ENCODE measurements at regions of chr9 and their contacts with region 1.

Region 1: GRCh38 chr9:33415501-33416038 is 13.2 kb upstream of the AQP7 start:
- DNase-seq: no peak
- H3K4me3 ChIP-seq: no peak overlapping the region
- H3K27me3 ChIP-seq: peaks cover 5% of the 10 kb centered on the region
- CTCF ChIP-seq: peak; percentile 82

Region 2: DNA sequence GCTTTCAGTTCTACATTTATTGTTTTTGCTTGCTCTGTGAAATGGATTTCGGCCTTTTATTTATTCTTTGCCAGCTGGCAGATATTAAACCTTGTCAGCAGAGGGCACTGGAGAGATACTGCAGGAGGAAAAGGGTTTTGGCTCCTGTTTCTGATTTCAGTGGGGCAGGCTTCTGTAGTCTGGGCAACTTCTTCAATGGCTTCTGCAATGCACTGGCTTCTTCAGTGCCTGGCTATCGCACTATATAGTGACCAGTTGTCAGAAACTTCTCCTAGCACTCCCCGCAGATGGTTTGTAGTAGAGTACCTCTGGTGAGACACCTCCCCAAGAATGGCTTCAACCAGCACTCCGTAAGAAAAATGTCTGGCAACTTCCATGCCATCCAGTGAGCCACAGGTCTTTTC is 128.5 kb before region 1 on chr9:
- CTCF ChIA-PET with region 1: interaction called, 25 read pairs
- POLR2A ChIA-PET with region 1: no interaction called
- DNase-seq: peak; percentile 15
- H3K4me3 ChIP-seq: no peak overlapping the region
- H3K27me3 ChIP-seq: no peaks in the 10 kb centered on the region
- CTCF ChIP-seq: peak; percentile 85

Region 3: GRCh38 chr9:33404788-33405362 is 10.7 kb before region 1 on chr9:
- CTCF ChIA-PET with region 1: interaction called, 42 read pairs
- POLR2A ChIA-PET with region 1: no interaction called
- DNase-seq: no peak
- H3K4me3 ChIP-seq: no peak overlapping the region
- H3K27me3 ChIP-seq: peaks cover 4% of the 10 kb centered on the region; the same call in 1 of the 2 replicates
- CTCF ChIP-seq: no peak

Region 4: DNA sequence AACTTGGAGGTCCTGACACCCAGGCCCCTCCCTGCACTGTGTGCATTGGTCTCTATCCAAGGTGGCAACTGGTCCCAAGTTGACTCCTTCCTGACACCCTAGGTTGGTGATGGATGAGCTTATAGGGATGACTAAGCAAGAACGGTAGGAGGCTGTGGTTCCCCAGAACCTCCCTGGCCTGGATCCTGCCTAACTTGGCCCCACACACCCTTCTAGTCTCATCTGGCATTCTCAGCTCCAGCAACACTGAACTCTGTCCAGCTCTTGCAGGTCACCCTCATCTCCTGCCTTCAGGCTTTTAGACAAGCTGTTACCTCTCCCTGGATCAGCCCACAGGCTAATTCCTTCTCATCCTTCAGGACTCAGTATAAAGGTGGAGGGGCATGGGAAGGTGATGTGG is 15.4 kb after region 1 on chr9:
- CTCF ChIA-PET with region 1: interaction called, 22 read pairs
- POLR2A ChIA-PET with region 1: no interaction called
- DNase-seq: no peak
- H3K4me3 ChIP-seq: no peak overlapping the region
- H3K27me3 ChIP-seq: peaks cover 3% of the 10 kb centered on the region
- CTCF ChIP-seq: no peak

Region 5: DNA sequence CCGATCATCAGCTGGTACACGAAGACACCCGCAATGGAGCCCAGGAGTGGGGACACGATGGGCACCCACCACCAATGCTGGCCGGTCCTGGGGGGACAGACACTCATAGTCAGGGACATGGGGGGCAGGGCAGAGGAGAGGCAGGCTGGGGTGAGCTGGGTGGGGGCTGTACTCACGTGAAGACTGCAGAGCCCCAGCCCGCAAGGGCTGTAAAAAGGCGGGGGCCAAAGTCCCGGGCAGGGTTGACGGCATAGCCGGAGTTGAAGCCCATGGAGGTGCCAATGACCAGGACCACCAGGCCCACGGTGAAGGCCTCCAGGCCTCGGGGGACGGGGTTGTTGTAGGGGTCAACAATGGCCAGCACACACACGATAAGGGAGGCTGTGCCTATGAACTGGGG is 26.6 kb after region 1 on chr9:
- CTCF ChIA-PET with region 1: interaction called, 16 read pairs
- POLR2A ChIA-PET with region 1: no interaction called
- DNase-seq: no peak
- H3K4me3 ChIP-seq: no peak overlapping the region
- H3K27me3 ChIP-seq: peaks cover 11% of the 10 kb centered on the region; the same call in 1 of the 2 replicates
- CTCF ChIP-seq: no peak

Region 6: DNA sequence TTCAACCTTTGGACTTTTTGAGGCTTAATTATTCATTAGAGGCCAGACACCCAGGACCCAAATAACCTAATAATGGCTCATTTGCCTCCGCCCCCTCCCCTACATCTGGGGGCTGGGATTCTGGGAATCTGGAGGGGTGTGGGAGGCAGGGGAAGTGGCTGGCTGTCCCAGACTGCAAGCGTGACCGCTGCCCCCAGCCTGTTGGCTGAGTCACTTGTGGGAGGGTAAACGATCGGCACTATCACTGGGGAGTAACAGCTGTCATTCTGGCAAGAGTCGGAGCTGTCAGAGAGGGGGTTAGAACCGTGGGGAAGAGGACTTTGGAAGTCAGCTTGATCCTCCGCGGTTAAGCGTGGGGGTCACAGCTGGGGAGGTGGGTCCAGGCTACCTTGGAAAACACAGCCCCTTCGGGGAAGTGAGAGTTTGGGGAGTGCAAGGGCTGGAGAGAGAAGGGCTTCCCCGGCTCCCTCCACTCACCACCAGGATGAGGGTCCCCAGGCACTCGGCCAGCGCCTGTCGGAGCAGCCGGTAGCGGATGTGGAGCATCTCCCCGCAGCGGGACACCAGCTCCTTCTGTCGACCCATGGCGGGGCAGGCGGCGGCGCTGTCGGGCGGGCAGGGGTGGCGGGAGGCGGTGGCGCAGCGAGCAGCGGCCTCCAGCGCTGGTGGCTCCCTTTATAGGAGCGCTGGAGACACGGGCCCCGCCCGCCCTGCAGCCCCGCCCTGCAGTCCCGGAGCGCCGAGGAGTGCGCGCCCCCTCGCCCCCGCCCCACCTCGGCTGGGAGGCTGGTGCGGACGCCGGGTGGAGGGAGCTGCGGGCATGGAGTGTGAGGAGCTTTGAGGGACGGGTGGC is 31.6 kb after region 1 on chr9 and contains the start of gene AQP3:
- CTCF ChIA-PET with region 1: interaction called, 16 read pairs
- POLR2A ChIA-PET with region 1: no interaction called
- DNase-seq: no peak
- H3K4me3 ChIP-seq: peak within 1 kb of the TSS; percentile 30
- H3K27me3 ChIP-seq: peaks cover 4% of the 10 kb centered on the region; the same call in 1 of the 2 replicates
- CTCF ChIP-seq: no peak
- polyA plus RNA-seq, gene AQP3: 0.40 and 0.47 TPM in 2 replicates

Region 7: GRCh38 chr9:33452828-33453271 is 37.3 kb after region 1 on chr9:
- CTCF ChIA-PET with region 1: interaction called, 16 read pairs
- POLR2A ChIA-PET with region 1: no interaction called
- DNase-seq: no peak
- H3K4me3 ChIP-seq: no peak overlapping the region
- H3K27me3 ChIP-seq: peaks cover 2% of the 10 kb centered on the region; the same call in 1 of the 2 replicates
- CTCF ChIP-seq: peak; percentile 86